Activated B cell treated with CpG ODN at 0.5 μM for 24 hours (primary cell): ENCODE measurements at regions of chr16 and their contacts with region 1.

Region 1: GRCh38 chr16:14458576-14458975 is 171.5 kb downstream of the PARN start:
- DNase-seq: no peak
- ATAC-seq: no peak
- H3K4me3 Mint-ChIP-seq: no peak overlapping the region
- H3K27ac Mint-ChIP-seq: no peak overlapping the region
- H3K4me1 Mint-ChIP-seq: no peaks in the 10 kb centered on the region
- H3K27me3 Mint-ChIP-seq: no peaks in the 10 kb centered on the region
- CTCF ChIP-seq: no peak

Region 2: DNA sequence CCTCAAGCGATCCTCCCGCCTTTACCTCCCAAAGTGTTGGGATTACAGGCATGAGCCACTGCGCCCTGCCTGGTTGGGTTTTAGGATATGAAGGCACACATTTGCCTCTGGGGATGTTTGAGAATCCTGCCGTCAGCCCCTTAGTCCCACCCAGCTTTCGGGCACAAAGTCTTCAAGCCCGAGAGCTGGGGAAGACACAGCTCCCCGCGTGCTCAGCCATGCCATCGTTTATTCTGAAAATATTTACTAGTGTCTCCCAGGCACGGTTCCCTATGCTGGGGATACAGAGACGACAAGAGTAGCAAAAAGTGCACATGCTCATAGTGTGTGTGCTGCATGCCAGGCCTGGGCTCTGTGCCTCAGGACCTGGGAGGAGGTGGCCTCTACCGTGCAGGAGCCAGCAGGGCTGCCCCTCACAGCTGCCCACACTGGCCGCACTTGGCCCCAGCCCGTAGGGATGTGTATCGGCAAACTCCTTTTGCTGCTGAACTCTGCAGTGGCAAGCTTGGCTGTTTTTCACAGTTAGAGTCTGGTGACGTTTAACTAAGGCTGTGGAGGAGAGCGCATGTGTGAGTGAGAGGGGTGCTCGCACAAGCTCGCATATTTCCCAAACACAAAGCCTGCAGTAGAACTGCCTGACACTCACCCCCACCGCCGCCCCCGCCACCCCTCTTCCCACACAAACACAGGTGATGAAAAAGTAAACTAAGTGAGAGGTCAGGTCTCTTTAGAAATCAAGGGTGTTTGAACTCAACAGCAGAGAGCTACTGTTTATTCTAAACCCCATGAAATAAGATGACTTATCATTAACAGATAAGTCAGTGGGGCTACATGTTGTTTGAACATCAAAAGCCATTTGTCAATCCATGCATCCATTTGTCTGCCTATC is 121.0 kb before region 1 on chr16:
- CTCF ChIA-PET with region 1: no interaction called
- POLR2A ChIA-PET with region 1: interaction called, 10 read pairs
- intact Hi-C with region 1: no loop called
- DNase-seq: no peak
- ATAC-seq: no peak
- H3K4me3 Mint-ChIP-seq: no peak overlapping the region
- H3K27ac Mint-ChIP-seq: no peak overlapping the region
- H3K4me1 Mint-ChIP-seq: no peaks in the 10 kb centered on the region
- H3K27me3 Mint-ChIP-seq: no peaks in the 10 kb centered on the region
- CTCF ChIP-seq: no peak

Region 3: DNA sequence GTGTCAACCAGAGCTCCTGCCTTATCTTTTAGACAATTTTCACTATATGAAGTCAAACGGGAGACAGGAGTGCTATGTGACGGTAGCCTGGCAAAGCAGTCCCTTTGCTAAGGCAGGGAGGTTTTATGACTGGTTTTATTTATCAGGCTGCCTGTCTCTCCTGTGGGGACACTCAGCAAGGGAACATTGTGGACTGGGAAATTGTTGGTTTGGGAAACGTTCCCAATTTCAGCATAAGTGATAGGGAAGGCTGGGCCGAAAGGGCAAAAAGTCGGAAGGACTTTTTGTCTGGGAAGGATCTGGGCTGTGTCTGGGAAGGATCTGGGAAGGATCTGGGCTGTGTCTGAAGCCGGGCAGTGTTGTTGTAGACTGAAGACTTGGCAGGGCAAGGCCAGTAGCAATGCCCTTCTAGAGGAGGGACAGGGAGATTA is 39.8 kb before region 1 on chr16:
- CTCF ChIA-PET with region 1: no interaction called
- POLR2A ChIA-PET with region 1: no interaction called
- intact Hi-C with region 1: no loop called
- DNase-seq: no peak
- ATAC-seq: no peak
- H3K4me3 Mint-ChIP-seq: no peak overlapping the region
- H3K27ac Mint-ChIP-seq: no peak overlapping the region
- H3K4me1 Mint-ChIP-seq: peaks cover 16% of the 10 kb centered on the region
- H3K27me3 Mint-ChIP-seq: no peaks in the 10 kb centered on the region
- CTCF ChIP-seq: no peak

Region 4: GRCh38 chr16:14501331-14502255 is 43.0 kb after region 1 on chr16:
- CTCF ChIA-PET with region 1: no interaction called
- POLR2A ChIA-PET with region 1: no interaction called
- intact Hi-C with region 1: no loop called
- DNase-seq: no peak
- ATAC-seq: no peak
- H3K4me3 Mint-ChIP-seq: no peak overlapping the region
- H3K27ac Mint-ChIP-seq: no peak overlapping the region
- H3K4me1 Mint-ChIP-seq: peaks cover 13% of the 10 kb centered on the region
- H3K27me3 Mint-ChIP-seq: no peaks in the 10 kb centered on the region
- CTCF ChIP-seq: no peak

Region 5: GRCh38 chr16:14641926-14642325 is 183.3 kb after region 1 on chr16:
- CTCF ChIA-PET with region 1: no interaction called
- POLR2A ChIA-PET with region 1: no interaction called
- intact Hi-C with region 1: no loop called
- DNase-seq: no peak
- ATAC-seq: no peak
- H3K4me3 Mint-ChIP-seq: no peak overlapping the region
- H3K27ac Mint-ChIP-seq: no peak overlapping the region
- H3K4me1 Mint-ChIP-seq: peaks cover 26% of the 10 kb centered on the region
- H3K27me3 Mint-ChIP-seq: no peaks in the 10 kb centered on the region
- CTCF ChIP-seq: no peak

Region 6: GRCh38 chr16:15636392-15636873 is 1177.9 kb after region 1 on chr16:
- CTCF ChIA-PET with region 1: no interaction called
- POLR2A ChIA-PET with region 1: no interaction called
- intact Hi-C with region 1: no loop called
- DNase-seq: no peak
- ATAC-seq: peak; percentile 62
- H3K4me3 Mint-ChIP-seq: peak overlapping the region; percentile 76
- H3K27ac Mint-ChIP-seq: peak overlapping the region; percentile 88
- H3K4me1 Mint-ChIP-seq: peaks cover 99% of the 10 kb centered on the region
- H3K27me3 Mint-ChIP-seq: no peaks in the 10 kb centered on the region
- CTCF ChIP-seq: no peak